Activated CD4-positive, alpha-beta T cell treated with anti-CD3 and anti-CD28 coated beads, Interleukin-2, amount 10 ng/mL, durations not matched to agents 24 days and 14 days (primary cell): ENCODE measurements at regions of chr12 and their contacts with region 1.

Region 1: DNA sequence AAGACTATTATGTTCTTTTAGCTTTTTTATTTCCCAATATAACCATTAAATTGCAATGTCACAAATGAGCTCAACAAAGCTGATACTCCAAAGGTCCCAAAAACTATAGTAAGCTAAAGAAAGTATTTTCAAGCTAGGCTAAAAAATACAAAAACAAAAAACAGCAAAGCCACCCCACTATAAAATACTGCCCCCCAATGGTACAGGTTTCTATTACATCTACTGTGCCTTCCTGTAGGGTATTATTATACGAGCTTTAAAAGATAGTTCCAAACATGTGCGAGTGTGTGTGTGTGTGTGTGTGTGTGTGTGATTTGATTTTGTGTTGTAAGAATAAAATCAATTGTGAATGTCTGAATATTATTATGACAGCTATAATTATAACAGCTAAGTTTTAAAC is 1.1 kb downstream of the IFNG start:
- DNase-seq: peak; percentile 81
- H3K4me3 Mint-ChIP-seq: peak overlapping the region; percentile 61
- H3K27ac Mint-ChIP-seq: peak overlapping the region; percentile 77
- H3K4me1 Mint-ChIP-seq: peaks cover 32% of the 10 kb centered on the region
- H3K27me3 Mint-ChIP-seq: no peaks in the 10 kb centered on the region

Region 2: GRCh38 chr12:68001486-68002466 is 156.7 kb before region 1 on chr12:
- intact Hi-C with region 1: loop called (anchors 1 kb)
- DNase-seq: no peak
- H3K4me3 Mint-ChIP-seq: no peak overlapping the region
- H3K27ac Mint-ChIP-seq: no peak overlapping the region
- H3K4me1 Mint-ChIP-seq: peaks cover 7% of the 10 kb centered on the region
- H3K27me3 Mint-ChIP-seq: no peaks in the 10 kb centered on the region

Region 3: GRCh38 chr12:68012712-68013111 is 145.7 kb before region 1 on chr12:
- intact Hi-C with region 1: no loop called
- DNase-seq: no peak
- H3K4me3 Mint-ChIP-seq: no peak overlapping the region
- H3K27ac Mint-ChIP-seq: no peak overlapping the region
- H3K4me1 Mint-ChIP-seq: peaks cover 3% of the 10 kb centered on the region
- H3K27me3 Mint-ChIP-seq: no peaks in the 10 kb centered on the region

Region 4: GRCh38 chr12:68067762-68068376 is 90.6 kb before region 1 on chr12:
- intact Hi-C with region 1: loop called (anchors 1 kb)
- DNase-seq: no peak
- H3K4me3 Mint-ChIP-seq: no peak overlapping the region
- H3K27ac Mint-ChIP-seq: peak overlapping the region; percentile 40
- H3K4me1 Mint-ChIP-seq: peaks cover 10% of the 10 kb centered on the region
- H3K27me3 Mint-ChIP-seq: no peaks in the 10 kb centered on the region

Region 5: GRCh38 chr12:68080577-68080976 is 77.9 kb before region 1 on chr12:
- intact Hi-C with region 1: loop called (anchors 2 kb)
- DNase-seq: peak; percentile 79
- H3K4me3 Mint-ChIP-seq: peak overlapping the region; percentile 59
- H3K27ac Mint-ChIP-seq: peak overlapping the region; percentile 84
- H3K4me1 Mint-ChIP-seq: peaks cover 34% of the 10 kb centered on the region
- H3K27me3 Mint-ChIP-seq: no peaks in the 10 kb centered on the region